ENCODE measurements at regions of chr4 and their contacts with region 1.

Region 1: DNA sequence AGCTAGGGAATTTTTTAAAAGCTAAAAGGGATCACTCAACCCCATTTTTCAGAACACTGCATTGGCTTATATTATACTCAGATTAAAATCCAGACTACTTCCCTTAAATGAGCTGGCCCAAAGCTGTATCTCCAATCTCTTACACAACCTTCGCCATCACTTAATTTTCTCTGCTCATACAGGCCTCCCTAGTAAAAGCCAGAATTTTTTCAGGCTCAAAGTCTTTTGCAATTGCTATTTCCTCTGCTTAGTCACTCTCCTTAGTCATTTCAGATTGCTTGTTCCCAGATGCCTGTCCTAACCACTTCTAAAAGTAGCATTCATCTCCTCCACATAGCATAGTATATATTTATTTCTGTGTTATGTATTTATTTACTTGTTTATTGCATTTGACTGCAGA is 1587.9 kb upstream of the ADGRL3 start:
- DNase-seq: no peak
- ATAC-seq: no peak
- H3K4me3 ChIP-seq: no peak overlapping the region
- H3K27ac ChIP-seq: no peak overlapping the region
- H3K4me1 ChIP-seq: peaks cover 0 to 10% (median 0%) of the 10 kb centered on the region in 9 donors
- H3K27me3 ChIP-seq: no peaks in the 10 kb centered on the region
- CTCF ChIP-seq: no peak

Region 2: GRCh38 chr4:59583845-59584568 is 28.2 kb before region 1 on chr4:
- intact Hi-C with region 1: loop called in 1 of 10 experiments (anchors 1 kb)
- DNase-seq: no peak
- ATAC-seq: no peak
- H3K4me3 ChIP-seq: no peak overlapping the region
- H3K27ac ChIP-seq: no peak overlapping the region
- H3K4me1 ChIP-seq: no peaks in the 10 kb centered on the region
- H3K27me3 ChIP-seq: no peaks in the 10 kb centered on the region
- CTCF ChIP-seq: no peak

Region 3: DNA sequence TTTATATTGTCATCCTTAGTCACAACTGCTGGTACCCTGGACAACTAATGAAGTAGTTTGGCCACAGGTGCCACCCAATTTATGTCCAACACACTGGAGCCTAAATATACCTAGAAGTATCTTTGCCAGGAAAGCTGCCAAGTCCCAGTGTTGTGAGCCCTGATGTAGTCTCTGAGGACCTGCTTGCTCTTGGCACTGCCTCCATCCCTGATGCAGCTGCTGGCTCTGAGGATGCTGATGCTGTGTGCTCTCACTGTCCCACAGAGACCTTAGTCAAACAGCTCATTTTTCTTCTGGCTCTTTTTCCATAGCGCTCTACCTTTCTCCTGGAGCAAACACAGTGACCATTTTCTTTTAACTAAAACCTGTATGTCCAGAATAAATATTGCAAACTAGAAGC is 52.5 kb after region 1 on chr4:
- intact Hi-C with region 1: no loop called
- DNase-seq: no peak
- ATAC-seq: no peak
- H3K4me3 ChIP-seq: no peak overlapping the region
- H3K27ac ChIP-seq: no peak overlapping the region
- H3K4me1 ChIP-seq: no peaks in the 10 kb centered on the region
- H3K27me3 ChIP-seq: no peaks in the 10 kb centered on the region
- CTCF ChIP-seq: no peak